ENCODE measurements at regions of chr10 and their contacts with region 1.

Region 1: DNA sequence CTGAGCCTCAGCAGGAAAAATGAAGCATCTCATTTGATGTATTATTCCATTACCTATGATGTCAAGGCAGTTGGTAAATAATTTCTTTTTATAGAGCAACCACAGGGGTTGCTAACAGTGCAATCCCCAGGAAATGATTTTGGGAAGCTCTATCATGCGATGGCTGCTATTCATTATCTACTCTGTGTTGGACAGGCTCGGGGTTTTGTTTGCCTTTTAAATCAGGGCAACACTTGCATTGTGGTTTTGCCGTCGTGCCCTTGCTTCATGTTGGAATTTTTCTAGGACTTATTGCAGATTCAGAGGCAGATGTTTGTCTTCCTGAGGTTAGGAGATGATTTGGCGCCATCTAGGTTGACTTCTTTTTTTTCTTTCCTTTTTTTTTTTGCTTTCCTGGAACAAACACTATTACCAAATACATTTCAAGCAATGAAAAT is 128.4 kb downstream of the BICC1 start:
- DNase-seq: peak; percentile 81
- ATAC-seq: peak; percentile 52; the same call in 2 of the 3 replicates
- H3K4me3 ChIP-seq: no peak overlapping the region
- H3K27ac ChIP-seq: no peak overlapping the region
- H3K4me1 ChIP-seq: peaks cover 33% of the 10 kb centered on the region
- H3K27me3 ChIP-seq: no peaks in the 10 kb centered on the region
- CTCF ChIP-seq: peak; percentile 58
- EP300 ChIP-seq: no peak
- POLR2A ChIP-seq: no peak
- RAD21 ChIP-seq: no peak

Region 2: GRCh38 chr10:58299580-58299979 is 341.5 kb before region 1 on chr10:
- CTCF ChIA-PET with region 1: no interaction called
- POLR2A ChIA-PET with region 1: no interaction called
- in situ Hi-C with region 1: no loop called
- intact Hi-C with region 1: loop called (anchors 10 kb)
- DNase-seq: peak; percentile 71
- ATAC-seq: peak; percentile 99
- H3K4me3 ChIP-seq: peak overlapping the region in 2 of 3 experiments; percentile 13 to 29; a peak in 2 of 6 replicates
- H3K27ac ChIP-seq: no peak overlapping the region
- H3K4me1 ChIP-seq: peaks cover 31% of the 10 kb centered on the region
- H3K27me3 ChIP-seq: no peaks in the 10 kb centered on the region
- CTCF ChIP-seq: peak; percentile 87
- EP300 ChIP-seq: no peak
- POLR2A ChIP-seq: no peak
- RAD21 ChIP-seq: peak; percentile 70

Region 3: DNA sequence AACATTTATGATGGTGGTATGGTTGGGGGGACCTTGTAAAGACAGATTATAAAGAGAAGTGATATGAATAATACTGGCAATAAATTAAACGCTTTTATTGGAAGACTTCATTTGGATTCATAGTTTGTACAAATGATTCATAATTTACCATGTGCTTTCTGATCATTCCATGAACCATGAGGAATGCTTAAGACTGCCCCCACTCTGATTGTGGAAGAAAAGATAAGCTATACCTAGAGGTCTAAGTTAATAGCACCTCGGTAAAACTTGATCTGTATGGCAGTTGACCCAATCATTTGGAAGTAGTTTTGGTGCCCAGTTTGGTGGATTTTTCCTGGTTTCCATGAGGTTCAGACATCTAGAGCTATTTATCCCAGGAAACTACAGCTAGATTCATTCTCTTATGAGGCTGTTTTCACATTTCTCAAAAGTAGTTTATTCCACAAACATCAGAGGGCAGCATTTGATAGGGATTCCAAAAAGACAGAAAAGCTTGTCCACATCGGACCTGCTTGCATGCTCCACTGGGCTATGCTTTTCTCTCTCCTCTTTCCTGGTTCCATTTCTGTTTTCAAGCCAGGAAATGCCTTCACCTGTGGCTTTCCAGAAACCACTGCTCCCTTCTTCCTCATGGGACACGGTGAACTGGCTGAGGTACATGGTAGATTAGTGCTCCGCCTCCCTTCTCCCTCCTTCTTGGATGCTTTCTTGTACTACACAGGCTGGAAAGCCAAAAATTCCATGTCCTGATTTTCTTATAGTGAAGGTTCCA is 226.7 kb before region 1 on chr10:
- CTCF ChIA-PET with region 1: interaction called, 4 read pairs
- POLR2A ChIA-PET with region 1: no interaction called
- in situ Hi-C with region 1: loop called (anchors 10 kb)
- intact Hi-C with region 1: loop called (anchors 2 kb)
- DNase-seq: peak; percentile 68
- ATAC-seq: peak; percentile 72
- H3K4me3 ChIP-seq: no peak overlapping the region
- H3K27ac ChIP-seq: no peak overlapping the region
- H3K4me1 ChIP-seq: peaks cover 9% of the 10 kb centered on the region
- H3K27me3 ChIP-seq: no peaks in the 10 kb centered on the region
- CTCF ChIP-seq: peak; percentile 65
- EP300 ChIP-seq: no peak
- POLR2A ChIP-seq: no peak
- RAD21 ChIP-seq: 0 out of 2 replicates have a peak, but pooled peaks have one; percentile 23

Region 4: GRCh38 chr10:58513188-58514110 is 127.7 kb before region 1 on chr10:
- CTCF ChIA-PET with region 1: no interaction called
- POLR2A ChIA-PET with region 1: no interaction called
- in situ Hi-C with region 1: loop called (anchors 10 kb)
- intact Hi-C with region 1: no loop called
- DNase-seq: no peak
- ATAC-seq: peak; percentile 67
- H3K4me3 ChIP-seq: peak overlapping the region; percentile 71 to 84 (median 80)
- H3K27ac ChIP-seq: peak overlapping the region; percentile 22
- H3K4me1 ChIP-seq: peaks cover 39% of the 10 kb centered on the region
- H3K27me3 ChIP-seq: no peaks in the 10 kb centered on the region; a peak in 1 of 5 replicates
- CTCF ChIP-seq: no peak
- EP300 ChIP-seq: no peak
- POLR2A ChIP-seq: no peak
- RAD21 ChIP-seq: no peak

Region 5: DNA sequence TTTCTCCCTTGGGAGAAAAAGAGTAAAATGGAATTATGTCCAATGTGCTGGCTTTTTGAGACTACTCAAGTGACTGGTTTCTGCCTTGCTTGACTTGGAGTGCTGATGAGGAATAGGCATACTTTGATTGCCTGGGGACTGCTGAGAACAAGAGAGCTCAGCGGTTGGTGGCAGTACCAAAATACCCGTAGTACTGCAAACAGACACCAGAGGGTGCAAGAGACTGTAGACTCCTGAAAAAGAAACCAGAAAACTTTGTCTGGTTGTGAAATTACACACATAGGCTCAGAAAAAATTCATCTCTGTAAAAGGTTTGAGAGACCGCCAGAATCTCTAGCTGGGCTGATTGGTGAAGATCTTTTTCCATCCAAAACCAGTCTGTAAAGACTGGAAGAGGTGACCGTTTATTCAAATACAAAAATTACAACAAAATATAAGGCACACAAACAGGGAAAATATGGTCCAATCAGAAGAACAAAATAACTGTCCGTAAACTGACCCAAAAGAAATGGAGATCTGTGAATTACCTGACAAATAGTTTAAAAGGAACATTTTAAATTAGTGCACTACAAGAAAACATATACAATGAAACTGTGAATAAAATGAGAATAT is 109.9 kb before region 1 on chr10:
- CTCF ChIA-PET with region 1: interaction called, 14 read pairs
- POLR2A ChIA-PET with region 1: no interaction called
- in situ Hi-C with region 1: loop called (anchors 5 kb)
- intact Hi-C with region 1: loop called (anchors 1 kb)
- DNase-seq: peak; percentile 65
- ATAC-seq: peak; percentile 89
- H3K4me3 ChIP-seq: no peak overlapping the region
- H3K27ac ChIP-seq: no peak overlapping the region
- H3K4me1 ChIP-seq: no peaks in the 10 kb centered on the region
- H3K27me3 ChIP-seq: no peaks in the 10 kb centered on the region
- CTCF ChIP-seq: peak; percentile 77
- EP300 ChIP-seq: no peak
- POLR2A ChIP-seq: no peak
- RAD21 ChIP-seq: peak; percentile 41

Region 6: DNA sequence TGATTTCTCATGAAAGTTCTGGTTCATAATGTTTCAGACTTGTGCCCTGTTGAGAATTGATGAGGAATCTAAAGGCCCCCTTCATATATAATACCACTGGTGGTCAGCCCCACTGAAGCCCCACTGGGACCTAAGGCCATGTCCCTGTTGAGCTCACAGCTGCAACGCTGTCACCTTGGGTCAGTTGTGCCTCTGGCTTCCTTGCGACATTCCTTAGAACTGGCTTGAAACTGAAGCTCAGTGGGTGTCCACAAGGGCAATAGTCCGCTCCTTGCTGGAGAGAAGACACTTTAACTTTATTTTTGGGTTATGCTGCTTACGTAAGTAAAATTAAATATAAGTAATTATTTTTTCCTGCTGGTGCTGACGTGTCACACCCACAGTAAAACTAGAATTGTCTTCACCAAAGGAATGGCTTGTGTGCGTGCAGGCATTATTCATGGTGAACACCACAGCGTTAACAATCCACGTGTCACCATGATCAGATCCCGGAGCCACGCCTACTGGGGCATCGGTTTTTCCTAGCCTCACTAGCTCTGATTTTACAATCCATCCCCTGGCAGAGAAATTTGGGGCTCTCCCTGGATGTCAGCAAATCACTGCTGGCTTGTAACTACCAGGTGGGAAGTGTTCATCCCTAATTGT is 62.0 kb before region 1 on chr10:
- CTCF ChIA-PET with region 1: no interaction called
- POLR2A ChIA-PET with region 1: no interaction called
- in situ Hi-C with region 1: no loop called
- intact Hi-C with region 1: no loop called
- DNase-seq: no peak
- ATAC-seq: no peak
- H3K4me3 ChIP-seq: no peak overlapping the region
- H3K27ac ChIP-seq: no peak overlapping the region
- H3K4me1 ChIP-seq: peaks cover 7% of the 10 kb centered on the region; the same call in 1 of the 2 replicates
- H3K27me3 ChIP-seq: no peaks in the 10 kb centered on the region
- CTCF ChIP-seq: no peak
- EP300 ChIP-seq: no peak
- POLR2A ChIP-seq: no peak
- RAD21 ChIP-seq: no peak

Region 7: DNA sequence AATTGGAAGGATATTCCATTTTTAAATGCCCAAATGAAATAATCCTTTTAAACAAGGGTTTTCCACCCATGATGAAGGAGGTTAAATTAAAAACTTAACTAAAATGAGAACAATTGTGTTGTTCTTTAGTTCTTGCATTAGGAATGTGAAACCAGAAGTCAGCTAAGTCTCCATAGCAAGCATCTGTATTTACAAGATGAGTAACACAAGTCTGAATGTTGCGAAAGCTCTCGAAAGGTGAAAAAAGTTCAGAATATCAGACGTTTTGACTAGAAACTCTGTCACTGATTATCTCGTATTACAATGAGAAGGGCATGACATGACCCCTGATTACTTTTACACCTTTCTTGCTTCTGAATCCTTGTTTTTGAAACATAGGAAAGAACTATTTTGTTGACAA is 21.2 kb after region 1 on chr10:
- CTCF ChIA-PET with region 1: no interaction called
- POLR2A ChIA-PET with region 1: no interaction called
- in situ Hi-C with region 1: no loop called
- intact Hi-C with region 1: loop called (anchors 1 kb)
- DNase-seq: peak; percentile 89
- ATAC-seq: peak; percentile 32; the same call in 1 of the 3 replicates
- H3K4me3 ChIP-seq: no peak overlapping the region
- H3K27ac ChIP-seq: no peak overlapping the region
- H3K4me1 ChIP-seq: peaks cover 27% of the 10 kb centered on the region
- H3K27me3 ChIP-seq: no peaks in the 10 kb centered on the region
- CTCF ChIP-seq: no peak
- EP300 ChIP-seq: peak in 1 of 2 experiments; percentile 57; a peak in 2 of 4 replicates
- POLR2A ChIP-seq: no peak
- RAD21 ChIP-seq: no peak

Region 8: DNA sequence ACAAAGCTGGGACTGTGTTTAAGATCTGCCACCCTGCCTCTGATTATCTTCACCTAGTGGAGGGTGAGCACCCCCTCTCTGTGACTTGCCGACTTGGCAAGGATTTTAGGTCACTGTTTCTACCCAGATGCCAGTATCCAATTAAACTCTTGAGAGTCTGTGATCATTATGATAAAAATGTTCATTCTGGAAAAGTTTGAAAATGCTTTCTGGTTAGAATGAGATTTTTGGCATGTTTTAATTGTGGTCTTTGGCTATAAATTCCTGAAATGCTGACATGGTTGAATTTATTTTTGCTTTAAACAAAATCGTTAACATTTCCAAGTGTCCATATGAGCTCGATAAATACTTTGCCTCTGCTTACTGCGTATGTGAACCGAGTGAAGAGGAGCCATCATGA is 93.0 kb after region 1 on chr10:
- CTCF ChIA-PET with region 1: no interaction called
- POLR2A ChIA-PET with region 1: no interaction called
- in situ Hi-C with region 1: no loop called
- intact Hi-C with region 1: no loop called
- DNase-seq: no peak
- ATAC-seq: no peak
- H3K4me3 ChIP-seq: no peak overlapping the region
- H3K27ac ChIP-seq: no peak overlapping the region
- H3K4me1 ChIP-seq: no peaks in the 10 kb centered on the region
- H3K27me3 ChIP-seq: no peaks in the 10 kb centered on the region
- CTCF ChIP-seq: no peak
- EP300 ChIP-seq: no peak
- POLR2A ChIP-seq: no peak
- RAD21 ChIP-seq: no peak

Measured in HepG2 (cell line).